Lower leg skin (tissue), 4 donors: ENCODE measurements at regions of chr1 and their contacts with region 1.

Region 1: GRCh38 chr1:3753656-3754454 is 1.6 kb downstream of the CCDC27 start:
- DNase-seq: no peak
- H3K4me3 ChIP-seq: no peak overlapping the region
- CTCF ChIP-seq: no peak
- POLR2A ChIP-seq: no peak

Region 2: GRCh38 chr1:4284976-4285375 is 531.1 kb after region 1 on chr1:
- intact Hi-C with region 1: loop called (anchors 5 kb)
- DNase-seq: no peak
- H3K4me3 ChIP-seq: no peak overlapping the region
- CTCF ChIP-seq: no peak
- POLR2A ChIP-seq: no peak